ENCODE measurements at regions of chr5 and their contacts with region 1.

Region 1: GRCh38 chr5:173887610-173888472 is at the start of gene CPEB4:
- DNase-seq: peak; percentile 97 to 100 (median 99)

Region 2: DNA sequence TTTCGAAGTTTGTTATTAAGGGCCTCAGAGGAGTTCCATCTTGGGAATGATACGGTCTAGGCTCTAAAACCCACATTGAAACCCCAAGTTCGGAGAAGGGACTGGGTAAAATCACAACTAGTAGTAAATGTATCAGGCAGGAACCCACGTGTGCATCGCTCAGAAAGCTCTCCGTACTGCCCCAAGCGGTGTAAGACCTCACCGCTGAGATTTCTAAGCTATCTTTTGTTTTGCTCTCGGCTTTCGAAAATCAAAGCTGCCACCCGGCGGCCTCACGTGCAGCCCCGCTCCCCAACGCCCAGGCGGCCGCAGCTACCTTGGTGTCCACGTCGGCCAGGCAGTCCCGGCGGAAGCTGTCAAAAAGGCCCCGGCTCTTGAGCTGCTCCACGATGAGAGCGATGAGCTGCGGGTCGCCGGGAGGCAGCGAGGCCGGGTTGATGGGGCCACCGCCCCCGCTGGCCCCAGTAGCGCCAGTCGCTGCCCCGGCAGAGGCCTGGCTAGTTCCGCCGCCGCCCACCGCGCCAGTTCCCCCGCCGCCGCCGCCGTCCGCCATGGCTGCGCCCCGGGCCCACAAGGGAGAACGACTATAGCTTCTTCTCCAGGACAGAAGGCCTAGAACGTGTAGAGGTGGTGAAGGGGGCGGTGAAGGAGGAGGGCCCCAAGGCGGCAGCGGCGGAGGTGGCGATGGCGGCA is 271.8 kb before region 1 on chr5:
- intact Hi-C with region 1: loop called (anchors 2 kb)
- DNase-seq: peak; percentile 37 to 93 (median 57)

Region 3: DNA sequence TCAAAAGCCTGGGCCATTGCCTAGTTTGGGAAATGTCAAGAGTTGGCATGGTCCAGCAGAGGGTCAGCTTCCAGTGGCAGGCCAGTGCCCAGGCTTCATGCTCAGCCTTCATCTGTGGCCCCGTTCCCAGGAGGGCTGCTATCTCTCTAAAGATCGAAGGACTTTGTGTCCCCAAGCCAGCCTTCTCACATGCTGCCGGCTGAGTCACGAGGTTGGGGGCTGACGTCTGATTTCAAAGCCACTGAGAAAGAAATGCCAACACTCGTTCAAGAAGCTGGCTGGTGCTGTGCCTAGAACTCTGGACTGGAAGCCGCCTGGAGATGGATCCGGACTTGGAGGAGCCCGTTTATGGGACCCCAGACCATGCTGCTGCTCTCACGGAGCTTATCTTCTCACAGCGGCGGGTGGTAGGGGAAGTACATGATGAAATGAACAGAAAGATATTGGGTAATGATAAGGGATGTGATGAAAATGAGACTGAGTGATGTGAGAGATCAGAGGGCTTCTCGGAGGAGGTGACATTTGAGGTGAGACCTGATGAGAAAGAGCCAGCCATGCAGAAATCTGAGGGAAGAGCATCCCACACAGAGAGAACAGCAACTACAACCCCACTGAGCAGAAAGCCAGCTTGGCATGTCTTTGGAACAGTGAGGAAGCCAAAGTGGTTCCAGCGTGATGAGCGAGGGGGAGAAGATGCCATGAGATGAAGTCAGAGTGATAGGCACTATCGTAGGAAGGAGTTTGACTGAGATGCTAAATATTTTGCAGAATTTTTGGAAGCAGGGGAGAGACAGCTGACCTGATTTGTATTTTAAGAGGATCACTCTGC is 216.5 kb before region 1 on chr5:
- intact Hi-C with region 1: loop called (anchors 5 kb)
- DNase-seq: peak; percentile 67 to 96 (median 78)

Region 4: DNA sequence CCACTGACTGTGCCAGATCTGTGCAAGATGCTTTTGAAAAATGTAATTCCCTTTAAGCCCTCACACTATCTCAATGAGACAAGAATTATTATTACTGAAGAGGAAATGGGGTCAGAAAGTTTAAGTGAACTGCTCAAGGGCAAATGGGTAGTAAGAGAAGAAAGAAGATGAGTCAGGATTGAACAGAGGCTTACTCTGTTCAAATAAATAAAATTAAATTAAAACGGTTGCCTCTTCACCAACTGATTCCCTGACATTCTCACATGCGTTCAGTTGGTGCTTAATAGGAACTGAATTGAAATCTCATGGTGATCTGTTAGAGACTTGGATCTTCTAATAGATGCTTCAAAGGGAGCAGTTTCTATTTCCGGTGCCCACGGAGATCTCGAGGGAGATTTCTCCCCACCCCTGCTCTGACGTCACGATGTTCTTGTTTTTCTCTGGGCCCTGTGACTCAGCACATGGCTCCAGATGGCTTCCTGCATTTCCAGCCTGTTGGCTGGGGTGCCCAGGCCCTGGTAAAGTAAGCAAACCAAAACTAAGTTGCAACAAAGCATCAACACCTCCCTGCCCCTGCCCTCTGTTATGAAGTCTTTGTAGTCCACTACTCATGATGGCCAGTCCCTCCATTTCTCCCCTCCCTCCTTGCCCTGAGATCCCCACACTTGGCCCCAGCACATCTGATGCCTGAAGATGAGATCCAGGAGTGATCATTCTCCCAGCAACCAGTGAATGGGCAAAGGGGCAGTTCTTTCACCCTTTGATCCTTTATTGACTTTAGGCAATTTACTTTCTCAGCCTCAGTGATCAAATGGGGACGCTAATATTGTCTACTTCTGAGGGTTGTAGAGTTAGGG is 105.8 kb before region 1 on chr5:
- intact Hi-C with region 1: loop called (anchors 10 kb)
- DNase-seq: peak; percentile 64 to 96 (median 80)

Region 5: GRCh38 chr5:173962436-173962835 is 74.6 kb after region 1 on chr5:
- intact Hi-C with region 1: no loop called
- DNase-seq: no peak

Region 6: GRCh38 chr5:173972925-173973615 is 85.2 kb after region 1 on chr5:
- intact Hi-C with region 1: loop called (anchors 5 kb)
- DNase-seq: peak; percentile 75 to 97 (median 89)

Measured in posterior cingulate gyrus (tissue), 11 donors.